Tibial artery (tissue), 4 donors: ENCODE measurements at regions of chr1 and their contacts with region 1.

Region 1: DNA sequence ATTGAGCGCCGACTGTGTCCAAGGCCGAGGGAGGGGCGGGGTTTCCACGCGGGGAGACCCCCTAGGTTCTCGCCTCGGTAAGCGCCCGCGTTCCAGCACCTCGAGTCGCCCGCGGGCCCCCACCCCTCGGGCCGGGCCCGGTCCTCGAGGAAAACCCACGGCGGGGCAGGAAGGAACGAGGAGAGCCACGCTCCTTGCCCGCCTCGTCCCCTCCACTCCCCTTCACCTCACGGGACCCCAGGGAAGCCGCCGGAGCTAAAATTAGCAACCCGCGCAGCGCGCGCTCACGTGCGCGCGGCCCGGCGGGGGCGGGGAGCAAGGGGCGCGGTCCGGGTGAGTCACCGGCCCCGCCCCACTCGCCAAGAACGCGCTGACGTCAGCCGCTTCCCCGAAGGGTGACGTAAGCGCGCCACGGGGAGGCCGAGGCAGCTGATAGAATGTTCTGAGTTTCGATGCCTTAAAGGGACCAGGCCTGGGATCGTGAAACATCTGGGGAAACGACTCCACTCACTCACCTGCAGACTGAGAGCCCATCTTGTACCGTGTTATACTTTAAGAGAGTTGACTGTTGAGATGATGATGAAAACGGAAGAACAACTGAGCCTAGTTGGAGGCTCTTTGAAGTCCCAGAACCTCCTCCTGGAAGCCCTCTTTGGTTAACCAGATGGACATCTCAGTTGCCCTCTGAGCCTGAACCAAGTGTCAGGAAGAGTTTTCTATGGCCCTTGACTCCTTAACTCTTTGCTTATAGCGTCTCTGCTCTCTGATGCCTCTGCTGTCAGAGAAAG is 49.7 kb upstream of the ATF3 start:
- DNase-seq: peak; percentile 92 to 97
- H3K4me3 ChIP-seq: peak overlapping the region; percentile 85 to 95
- H3K27ac ChIP-seq: peak overlapping the region; percentile 96 to 97
- H3K4me1 ChIP-seq: peaks cover 5 to 46% (median 20%) of the 10 kb centered on the region in 4 donors
- H3K27me3 ChIP-seq: no peaks in the 10 kb centered on the region
- CTCF ChIP-seq: no peak

Region 2: GRCh38 chr1:212284744-212285684 is 273.9 kb before region 1 on chr1 and contains the start of gene PPP2R5A:
- intact Hi-C with region 1: loop called (anchors 10 kb)
- DNase-seq: peak; percentile 99 to 100
- H3K4me3 ChIP-seq: peak within 1 kb of the TSS; percentile 83 to 88
- H3K27ac ChIP-seq: peak within 1 kb of the TSS; percentile 96 to 99
- H3K4me1 ChIP-seq: peaks cover 0 to 30% (median 19%) of the 10 kb centered on the region in 4 donors
- H3K27me3 ChIP-seq: no peaks in the 10 kb centered on the region
- CTCF ChIP-seq: no peak

Region 3: GRCh38 chr1:212607206-212607912 is 48.5 kb after region 1 on chr1:
- intact Hi-C with region 1: loop called (anchors 2 kb)
- DNase-seq: peak; percentile 49 to 78
- H3K4me3 ChIP-seq: peak overlapping the region; percentile 65 to 84
- H3K27ac ChIP-seq: peak overlapping the region; percentile 91 to 99
- H3K4me1 ChIP-seq: peaks cover 0 to 56% (median 39%) of the 10 kb centered on the region in 4 donors
- H3K27me3 ChIP-seq: peaks cover 0 to 3% of the 10 kb centered on the region in 2 donors
- CTCF ChIP-seq: no peak